Calu3 (cell line): ENCODE measurements at regions of chr1 and their contacts with region 1.

Region 1: GRCh38 chr1:33127001-33127791 is 46.2 kb downstream of the AZIN2 start:
- DNase-seq: peak; percentile 95
- H3K4me3 Mint-ChIP-seq: peak overlapping the region; percentile 81
- H3K27ac Mint-ChIP-seq: peak overlapping the region; percentile 92
- H3K4me1 Mint-ChIP-seq: no peaks in the 10 kb centered on the region
- H3K27me3 Mint-ChIP-seq: peaks cover 14% of the 10 kb centered on the region
- CTCF ChIP-seq: peak; percentile 77

Region 2: GRCh38 chr1:32939655-32940371 is 187.4 kb before region 1 on chr1:
- CTCF ChIA-PET with region 1: no interaction called
- intact Hi-C with region 1: no loop called
- DNase-seq: peak; percentile 11
- H3K4me3 Mint-ChIP-seq: no peak overlapping the region
- H3K27ac Mint-ChIP-seq: peak overlapping the region; percentile 42
- H3K4me1 Mint-ChIP-seq: peaks cover 39% of the 10 kb centered on the region
- H3K27me3 Mint-ChIP-seq: no peaks in the 10 kb centered on the region
- CTCF ChIP-seq: no peak

Region 3: GRCh38 chr1:33060579-33061083 is 66.6 kb before region 1 on chr1:
- CTCF ChIA-PET with region 1: no interaction called
- intact Hi-C with region 1: no loop called
- DNase-seq: no peak
- H3K4me3 Mint-ChIP-seq: no peak overlapping the region
- H3K27ac Mint-ChIP-seq: no peak overlapping the region
- H3K4me1 Mint-ChIP-seq: peaks cover 4% of the 10 kb centered on the region
- H3K27me3 Mint-ChIP-seq: peaks cover 13% of the 10 kb centered on the region
- CTCF ChIP-seq: no peak

Region 4: GRCh38 chr1:33094971-33095604 is 32.1 kb before region 1 on chr1:
- CTCF ChIA-PET with region 1: interaction called, 15 read pairs
- intact Hi-C with region 1: no loop called
- DNase-seq: peak; percentile 76
- H3K4me3 Mint-ChIP-seq: no peak overlapping the region
- H3K27ac Mint-ChIP-seq: no peak overlapping the region
- H3K4me1 Mint-ChIP-seq: peaks cover 17% of the 10 kb centered on the region
- H3K27me3 Mint-ChIP-seq: peaks cover 8% of the 10 kb centered on the region
- CTCF ChIP-seq: peak; percentile 90

Region 5: DNA sequence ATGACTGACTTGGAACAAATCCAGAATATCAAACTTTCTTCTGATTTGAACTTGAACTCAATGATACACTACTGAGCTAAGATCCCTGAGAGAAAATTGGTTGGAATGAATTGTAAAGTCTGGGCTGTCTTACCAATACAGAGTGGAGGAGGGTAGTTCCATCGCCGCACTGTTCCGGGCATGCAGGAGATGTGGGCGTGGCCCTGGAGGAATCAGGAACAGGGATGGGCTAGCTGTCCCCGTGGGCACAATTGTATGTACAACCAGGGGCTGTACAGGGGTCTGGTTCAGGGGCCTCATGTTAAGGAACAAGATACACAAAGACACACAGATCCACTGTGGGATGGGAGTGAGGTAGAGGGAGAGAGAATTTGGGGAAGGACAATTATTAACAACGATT is 489.6 kb after region 1 on chr1:
- CTCF ChIA-PET with region 1: no interaction called
- intact Hi-C with region 1: loop called (anchors 10 kb)
- DNase-seq: no peak
- H3K4me3 Mint-ChIP-seq: no peak overlapping the region
- H3K27ac Mint-ChIP-seq: no peak overlapping the region
- H3K4me1 Mint-ChIP-seq: no peaks in the 10 kb centered on the region
- H3K27me3 Mint-ChIP-seq: peaks cover 91% of the 10 kb centered on the region
- CTCF ChIP-seq: no peak